ENCODE measurements at regions of chr3 and their contacts with region 1.

Region 1: GRCh38 chr3:124761250-124761796 is 31.1 kb downstream of the UMPS start:
- DNase-seq: peak; percentile 87
- ATAC-seq: peak; percentile 86
- H3K4me3 Mint-ChIP-seq: no peak overlapping the region
- H3K27ac Mint-ChIP-seq: no peak overlapping the region
- H3K4me1 Mint-ChIP-seq: peaks cover 2% of the 10 kb centered on the region
- H3K27me3 Mint-ChIP-seq: no peaks in the 10 kb centered on the region
- CTCF ChIP-seq: peak; percentile 96

Region 2: GRCh38 chr3:124741027-124741426 is 20.3 kb before region 1 on chr3:
- CTCF ChIA-PET with region 1: interaction called, 13 read pairs
- POLR2A ChIA-PET with region 1: interaction called, 4 read pairs
- intact Hi-C with region 1: no loop called
- DNase-seq: no peak
- ATAC-seq: no peak
- H3K4me3 Mint-ChIP-seq: no peak overlapping the region
- H3K27ac Mint-ChIP-seq: no peak overlapping the region
- H3K4me1 Mint-ChIP-seq: peaks cover 18% of the 10 kb centered on the region
- H3K27me3 Mint-ChIP-seq: no peaks in the 10 kb centered on the region
- CTCF ChIP-seq: no peak

Region 3: GRCh38 chr3:124786441-124787241 is 25.3 kb after region 1 on chr3:
- CTCF ChIA-PET with region 1: interaction called, 13 read pairs
- POLR2A ChIA-PET with region 1: no interaction called
- intact Hi-C with region 1: no loop called
- DNase-seq: no peak
- ATAC-seq: no peak
- H3K4me3 Mint-ChIP-seq: no peak overlapping the region
- H3K27ac Mint-ChIP-seq: no peak overlapping the region
- H3K4me1 Mint-ChIP-seq: peaks cover 4% of the 10 kb centered on the region
- H3K27me3 Mint-ChIP-seq: peaks cover 3% of the 10 kb centered on the region
- CTCF ChIP-seq: no peak

Region 4: GRCh38 chr3:124895756-124896155 is 134.4 kb after region 1 on chr3:
- CTCF ChIA-PET with region 1: interaction called, 231 read pairs
- POLR2A ChIA-PET with region 1: interaction called, 4 read pairs
- intact Hi-C with region 1: loop called (anchors 2 kb)
- DNase-seq: no peak
- ATAC-seq: no peak
- H3K4me3 Mint-ChIP-seq: no peak overlapping the region
- H3K27ac Mint-ChIP-seq: no peak overlapping the region
- H3K4me1 Mint-ChIP-seq: peaks cover 3% of the 10 kb centered on the region
- H3K27me3 Mint-ChIP-seq: peaks cover 2% of the 10 kb centered on the region
- CTCF ChIP-seq: no peak

Region 5: DNA sequence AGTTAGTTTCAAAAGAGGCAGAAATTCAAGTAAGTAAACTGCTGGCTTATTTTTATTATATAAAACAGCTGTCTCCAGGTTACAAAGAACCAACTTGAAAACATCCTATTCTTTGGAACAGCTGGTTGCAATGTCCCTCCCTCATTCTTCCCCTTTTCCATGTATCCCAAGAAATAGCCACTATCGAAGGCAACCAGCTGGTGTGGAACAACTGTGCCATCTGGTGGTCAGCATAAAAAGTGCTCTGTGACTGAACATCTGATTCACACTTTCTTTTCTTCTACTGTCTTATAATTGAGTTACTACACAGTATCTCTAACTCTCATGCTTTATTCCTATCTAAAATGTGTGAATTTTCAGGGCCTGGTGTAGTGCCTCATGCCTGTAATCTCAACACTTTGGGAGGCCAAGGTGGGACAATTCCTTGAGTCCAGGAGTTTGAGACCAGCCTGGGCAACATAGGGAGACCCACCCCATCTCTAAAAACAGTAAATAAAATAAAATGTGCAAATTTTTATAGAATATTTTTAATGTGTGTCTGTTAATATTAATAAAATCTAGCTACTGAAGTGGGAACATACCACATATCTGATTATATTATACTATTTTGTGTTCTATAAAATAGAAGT is 824.4 kb after region 1 on chr3:
- CTCF ChIA-PET with region 1: interaction called, 7 read pairs
- POLR2A ChIA-PET with region 1: no interaction called
- intact Hi-C with region 1: loop called (anchors 10 kb)
- DNase-seq: peak; percentile 67
- ATAC-seq: peak; percentile 66
- H3K4me3 Mint-ChIP-seq: no peak overlapping the region
- H3K27ac Mint-ChIP-seq: no peak overlapping the region
- H3K4me1 Mint-ChIP-seq: peaks cover 28% of the 10 kb centered on the region
- H3K27me3 Mint-ChIP-seq: no peaks in the 10 kb centered on the region
- CTCF ChIP-seq: peak; percentile 95